ENCODE measurements at regions of chr3 and their contacts with region 1.

Region 1: DNA sequence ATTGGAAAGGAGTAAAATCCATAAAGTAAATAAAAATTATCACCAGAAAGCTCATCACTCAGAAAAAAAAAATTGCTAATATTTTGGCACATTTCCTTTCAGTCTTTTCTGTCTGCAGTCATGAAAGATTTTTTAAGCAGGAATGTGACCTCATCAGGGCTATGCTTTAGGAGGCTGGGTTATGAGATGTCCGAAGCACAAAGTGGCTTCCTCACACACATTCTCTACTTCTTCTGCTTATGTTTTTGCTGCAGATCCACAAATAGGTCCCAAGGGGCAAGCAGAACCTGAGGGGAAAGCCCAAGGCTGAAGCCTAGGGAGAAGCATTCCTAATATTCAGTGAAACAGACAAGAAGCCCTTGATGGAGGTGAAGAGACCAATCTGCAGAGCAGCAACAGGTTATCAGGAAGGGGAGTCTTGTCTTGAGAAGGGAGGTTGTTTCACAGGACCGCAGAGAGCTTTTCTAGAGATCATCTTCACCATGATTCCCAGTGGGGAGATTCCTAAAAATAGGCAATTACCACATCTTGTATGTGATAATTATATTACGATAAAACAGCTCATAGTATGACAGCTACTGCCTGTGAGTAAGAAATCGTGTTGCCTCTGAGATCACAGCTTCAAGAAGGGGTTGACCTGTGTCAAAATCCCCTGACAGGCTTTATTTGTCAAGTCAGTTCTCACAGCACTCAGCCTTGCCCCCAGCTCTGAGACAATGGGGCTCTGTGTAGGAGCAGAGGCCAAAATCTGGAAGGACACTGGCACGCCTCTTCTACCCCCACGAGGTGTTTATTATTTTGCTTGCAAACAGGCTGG is 60.5 kb downstream of the IGF2BP2 start:
- DNase-seq: no peak
- H3K4me3 Mint-ChIP-seq: no peak overlapping the region
- H3K27ac Mint-ChIP-seq: no peak overlapping the region
- H3K4me1 Mint-ChIP-seq: peaks cover 2% of the 10 kb centered on the region
- H3K27me3 Mint-ChIP-seq: peaks cover 34% of the 10 kb centered on the region

Region 2: GRCh38 chr3:184942735-184943134 is 821.6 kb before region 1 on chr3:
- CTCF ChIA-PET with region 1: no interaction called
- intact Hi-C with region 1: no loop called
- DNase-seq: no peak
- H3K4me3 Mint-ChIP-seq: no peak overlapping the region
- H3K27ac Mint-ChIP-seq: no peak overlapping the region
- H3K4me1 Mint-ChIP-seq: no peaks in the 10 kb centered on the region
- H3K27me3 Mint-ChIP-seq: no peaks in the 10 kb centered on the region

Region 3: DNA sequence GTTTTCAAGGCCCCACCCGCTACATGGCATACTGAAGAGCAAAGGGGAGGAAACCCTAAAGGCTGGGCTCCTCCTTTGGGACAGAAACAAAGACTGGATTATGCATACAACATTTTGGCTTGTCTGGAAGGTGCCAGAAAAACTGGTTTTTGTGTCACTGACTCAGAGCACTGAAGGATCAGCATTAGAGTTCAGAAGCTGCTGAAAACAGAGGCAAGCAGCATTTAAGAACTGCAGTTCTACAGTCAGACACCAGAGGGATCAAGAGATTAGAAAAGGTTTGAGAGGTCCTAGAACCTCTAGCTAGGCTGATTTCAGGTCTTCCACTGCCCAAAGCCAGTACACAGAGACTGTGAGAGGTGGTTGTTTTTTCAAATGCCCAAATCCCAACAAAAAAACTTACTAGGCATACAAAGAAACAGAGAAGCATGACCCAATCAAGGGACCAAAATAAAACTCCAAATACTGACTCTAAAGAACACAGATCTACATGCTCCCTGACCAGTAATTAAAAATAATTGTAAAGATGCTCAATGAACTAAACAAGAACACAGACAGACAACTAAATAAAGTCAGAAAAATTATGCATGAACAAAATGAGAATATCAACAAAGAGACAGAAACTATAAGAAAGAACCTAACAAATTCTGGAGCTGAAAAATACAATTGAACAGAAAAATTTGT is 87.1 kb before region 1 on chr3:
- CTCF ChIA-PET with region 1: interaction called, 13 read pairs
- intact Hi-C with region 1: loop called (anchors 1 kb)
- DNase-seq: no peak
- H3K4me3 Mint-ChIP-seq: no peak overlapping the region
- H3K27ac Mint-ChIP-seq: no peak overlapping the region
- H3K4me1 Mint-ChIP-seq: no peaks in the 10 kb centered on the region
- H3K27me3 Mint-ChIP-seq: peaks cover 14% of the 10 kb centered on the region

Region 4: GRCh38 chr3:185733980-185734724 is 30.2 kb before region 1 on chr3:
- CTCF ChIA-PET with region 1: interaction called, 12 read pairs
- intact Hi-C with region 1: no loop called
- DNase-seq: peak; percentile 50
- H3K4me3 Mint-ChIP-seq: no peak overlapping the region
- H3K27ac Mint-ChIP-seq: no peak overlapping the region
- H3K4me1 Mint-ChIP-seq: no peaks in the 10 kb centered on the region
- H3K27me3 Mint-ChIP-seq: peaks cover 5% of the 10 kb centered on the region

Region 5: GRCh38 chr3:185781759-185782158 is 17.4 kb after region 1 on chr3:
- CTCF ChIA-PET with region 1: interaction called, 13 read pairs
- intact Hi-C with region 1: no loop called
- DNase-seq: no peak
- H3K4me3 Mint-ChIP-seq: no peak overlapping the region
- H3K27ac Mint-ChIP-seq: no peak overlapping the region
- H3K4me1 Mint-ChIP-seq: no peaks in the 10 kb centered on the region
- H3K27me3 Mint-ChIP-seq: peaks cover 4% of the 10 kb centered on the region

Region 6: GRCh38 chr3:185959609-185960517 is 195.5 kb after region 1 on chr3:
- CTCF ChIA-PET with region 1: no interaction called
- intact Hi-C with region 1: no loop called
- DNase-seq: peak; percentile 38
- H3K4me3 Mint-ChIP-seq: no peak overlapping the region
- H3K27ac Mint-ChIP-seq: no peak overlapping the region
- H3K4me1 Mint-ChIP-seq: peaks cover 9% of the 10 kb centered on the region
- H3K27me3 Mint-ChIP-seq: no peaks in the 10 kb centered on the region

Measured in activated naive CD4-positive, alpha-beta T cell treated with anti-CD3 and anti-CD28 coated beads for 36 hours (primary cell).